Heart left ventricle (tissue), 16 donors: ENCODE measurements at regions of chr15 and their contacts with region 1.

Region 1: GRCh38 chr15:25863111-25863967 is at the start of gene ATP10A:
- DNase-seq: peak in 4 of 5 donors; percentile 40 to 73 (median 52)
- ATAC-seq: peak in 3 of 4 donors; percentile 36 to 70 (median 58)
- H3K4me3 ChIP-seq: peak within 1 kb of the TSS; percentile 15 to 77 (median 61)
- H3K27ac ChIP-seq: peak within 1 kb of the TSS in 11 of 12 donors; percentile 20 to 70 (median 53)
- H3K4me1 ChIP-seq: peaks cover 0 to 40% (median 6%) of the 10 kb centered on the region in 12 donors
- H3K27me3 ChIP-seq: peaks cover 0 to 30% (median 12%) of the 10 kb centered on the region in 9 donors
- CTCF ChIP-seq: no peak
- POLR2A ChIP-seq: no peak
- total RNA-seq, gene ATP10A: 0.55 to 3.3 (median 1.0) TPM

Region 2: GRCh38 chr15:25739687-25740121 is 123.6 kb before region 1 on chr15:
- intact Hi-C with region 1: loop called in 4 of 10 experiments (anchors 5 to 10 kb)
- DNase-seq: no peak
- ATAC-seq: peak in 1 of 4 donors; percentile 33
- H3K4me3 ChIP-seq: no peak overlapping the region
- H3K27ac ChIP-seq: no peak overlapping the region
- H3K4me1 ChIP-seq: peaks cover 0 to 38% (median 16%) of the 10 kb centered on the region in 12 donors
- H3K27me3 ChIP-seq: no peaks in the 10 kb centered on the region
- CTCF ChIP-seq: peak in 8 of 12 donors; percentile 16 to 40 (median 34)
- POLR2A ChIP-seq: no peak

Region 3: DNA sequence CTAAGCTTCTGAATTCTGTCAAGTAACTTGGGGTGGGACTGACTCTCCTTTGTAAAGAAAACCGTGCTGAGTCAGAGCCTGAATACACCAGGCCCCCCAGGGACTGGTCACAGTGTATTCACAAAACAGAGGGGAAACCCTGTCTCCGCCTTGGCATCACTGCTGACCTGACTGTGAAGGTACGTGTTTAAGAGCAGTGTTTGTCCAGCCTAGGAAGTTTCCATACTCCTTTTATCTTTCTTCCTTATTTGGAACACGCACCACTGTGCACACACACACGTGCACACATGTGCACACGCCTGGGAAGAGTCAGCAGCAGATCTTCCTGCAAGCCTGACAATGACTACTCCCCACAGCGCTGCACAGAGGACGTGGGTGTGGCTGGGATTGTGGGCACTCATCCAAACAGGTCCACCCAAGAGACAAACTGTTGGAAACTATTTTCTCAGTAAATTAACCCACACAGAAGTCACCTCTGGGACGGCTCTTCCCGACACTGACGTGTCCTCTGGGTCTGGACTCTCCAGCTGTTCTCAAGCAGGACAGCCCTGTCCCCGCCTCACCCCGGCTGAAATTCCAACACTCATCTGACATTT is 87.9 kb before region 1 on chr15:
- intact Hi-C with region 1: loop called in 1 of 10 experiments (anchors 5 kb)
- DNase-seq: peak; percentile 65 to 85 (median 79)
- ATAC-seq: peak; percentile 79 to 94 (median 92)
- H3K4me3 ChIP-seq: no peak overlapping the region
- H3K27ac ChIP-seq: peak overlapping the region in 8 of 12 donors; percentile 19 to 46 (median 33)
- H3K4me1 ChIP-seq: peaks cover 0 to 20% (median 9%) of the 10 kb centered on the region in 12 donors
- H3K27me3 ChIP-seq: no peaks in the 10 kb centered on the region
- CTCF ChIP-seq: no peak
- POLR2A ChIP-seq: no peak

Region 4: DNA sequence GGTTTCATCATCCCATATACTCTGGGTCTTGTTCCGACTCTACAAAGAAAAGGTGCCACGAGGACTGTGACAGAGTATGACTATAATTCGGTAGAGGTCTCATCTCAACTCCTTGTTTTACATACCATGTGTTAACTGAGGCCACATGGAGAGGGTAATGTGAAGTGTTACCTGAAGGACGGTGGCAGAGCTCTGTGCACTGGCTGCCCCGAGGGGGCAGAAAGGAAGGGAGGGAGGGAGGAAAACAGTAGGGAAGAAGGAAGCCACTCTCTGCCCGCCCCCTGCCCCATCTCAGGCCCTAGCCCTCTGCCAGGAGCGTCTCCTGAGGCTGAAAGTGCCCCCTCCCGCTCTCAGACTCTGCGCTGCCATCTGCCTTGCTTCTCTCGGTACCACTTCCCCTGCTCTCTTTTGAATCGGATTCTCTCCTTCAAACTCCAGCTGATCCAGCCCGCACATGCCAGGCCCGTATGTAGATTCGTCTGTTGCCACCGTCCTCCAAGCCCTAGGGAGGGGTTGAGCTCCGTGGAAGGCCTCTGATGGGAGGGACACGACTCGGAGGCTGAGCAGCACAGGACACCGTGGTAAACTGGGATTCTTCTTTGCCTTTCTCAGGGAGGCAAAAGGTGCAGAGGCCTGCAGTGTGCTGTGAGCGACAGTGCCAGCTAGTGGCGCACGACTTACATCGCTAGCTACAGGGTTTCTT is 70.3 kb after region 1 on chr15:
- intact Hi-C with region 1: no loop called
- DNase-seq: peak; percentile 44 to 80 (median 72)
- ATAC-seq: peak; percentile 88 to 98 (median 92)
- H3K4me3 ChIP-seq: peak overlapping the region in 8 of 12 donors; percentile 10 to 43 (median 28)
- H3K27ac ChIP-seq: no peak overlapping the region
- H3K4me1 ChIP-seq: peaks cover 0 to 7% (median 1%) of the 10 kb centered on the region in 12 donors
- H3K27me3 ChIP-seq: no peaks in the 10 kb centered on the region
- CTCF ChIP-seq: peak; percentile 44 to 75 (median 63)
- POLR2A ChIP-seq: no peak

Region 5: DNA sequence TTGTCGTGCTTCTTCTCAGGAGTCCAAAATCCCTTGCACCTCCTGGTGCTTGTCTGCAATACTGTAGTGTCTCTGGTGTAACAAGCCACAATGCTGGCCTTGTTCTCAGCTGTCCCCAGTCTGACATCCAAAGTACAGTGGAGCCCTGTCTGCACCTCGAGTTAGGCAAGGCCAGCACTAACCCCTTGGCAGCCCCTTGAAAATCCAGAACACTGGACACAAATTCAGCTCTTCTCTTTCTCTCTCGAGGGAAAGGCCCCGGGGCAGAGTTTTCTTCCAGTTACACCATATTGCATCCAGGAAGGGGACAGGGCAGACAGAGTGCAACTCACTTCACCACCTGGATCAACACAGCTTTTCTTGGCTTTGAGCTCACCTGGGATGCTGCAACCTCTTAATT is 91.1 kb after region 1 on chr15:
- intact Hi-C with region 1: no loop called
- DNase-seq: no peak
- ATAC-seq: no peak
- H3K4me3 ChIP-seq: no peak overlapping the region
- H3K27ac ChIP-seq: no peak overlapping the region
- H3K4me1 ChIP-seq: no peaks in the 10 kb centered on the region
- H3K27me3 ChIP-seq: peaks cover 0 to 6% (median 0%) of the 10 kb centered on the region in 9 donors
- CTCF ChIP-seq: no peak
- POLR2A ChIP-seq: no peak